ENCODE measurements at regions of chr10 and their contacts with region 1.

Region 1: DNA sequence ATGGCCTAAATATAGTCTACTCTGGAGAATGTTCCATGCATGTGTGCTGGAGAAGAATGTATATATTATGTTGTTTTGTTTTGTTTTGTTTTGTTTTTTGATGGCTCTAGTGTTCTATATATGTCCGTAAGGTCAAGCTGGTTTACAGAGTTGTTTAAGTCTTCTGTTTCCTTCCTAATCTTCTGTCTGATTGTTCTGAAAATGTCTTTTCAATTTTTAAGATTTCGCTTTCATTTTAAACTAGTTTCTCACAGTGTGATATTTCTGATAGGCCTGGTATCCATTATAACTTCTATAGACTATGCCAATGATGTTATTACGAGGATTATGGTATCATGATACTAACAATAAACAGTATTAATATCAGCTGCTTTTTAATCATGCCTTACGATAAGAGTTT is 1126.3 kb upstream of the SORCS1 start:
- DNase-seq: no peak
- H3K4me3 ChIP-seq: no peak overlapping the region
- H3K27ac ChIP-seq: no peak overlapping the region
- H3K4me1 ChIP-seq: no peaks in the 10 kb centered on the region
- H3K27me3 ChIP-seq: no peaks in the 10 kb centered on the region
- CTCF ChIP-seq: no peak
- EP300 ChIP-seq: no peak
- POLR2A ChIP-seq: no peak

Region 2: GRCh38 chr10:108721882-108722281 is 431.1 kb after region 1 on chr10:
- intact Hi-C with region 1: no loop called
- DNase-seq: no peak
- H3K4me3 ChIP-seq: no peak overlapping the region
- H3K27ac ChIP-seq: no peak overlapping the region
- H3K4me1 ChIP-seq: no peaks in the 10 kb centered on the region
- H3K27me3 ChIP-seq: no peaks in the 10 kb centered on the region
- CTCF ChIP-seq: no peak
- EP300 ChIP-seq: no peak
- POLR2A ChIP-seq: no peak

Region 3: GRCh38 chr10:109616359-109616980 is 1325.6 kb after region 1 on chr10:
- intact Hi-C with region 1: loop called in 1 of 4 experiments (anchors 5 kb)
- DNase-seq: no peak
- H3K4me3 ChIP-seq: no peak overlapping the region
- H3K27ac ChIP-seq: no peak overlapping the region
- H3K4me1 ChIP-seq: no peaks in the 10 kb centered on the region
- H3K27me3 ChIP-seq: no peaks in the 10 kb centered on the region
- CTCF ChIP-seq: no peak
- EP300 ChIP-seq: no peak
- POLR2A ChIP-seq: no peak

Measured in ovary (tissue), 10 donors.